CD4-positive, alpha-beta T cell (primary cell): ENCODE measurements at regions of chr17 and their contacts with region 1.

Region 1: DNA sequence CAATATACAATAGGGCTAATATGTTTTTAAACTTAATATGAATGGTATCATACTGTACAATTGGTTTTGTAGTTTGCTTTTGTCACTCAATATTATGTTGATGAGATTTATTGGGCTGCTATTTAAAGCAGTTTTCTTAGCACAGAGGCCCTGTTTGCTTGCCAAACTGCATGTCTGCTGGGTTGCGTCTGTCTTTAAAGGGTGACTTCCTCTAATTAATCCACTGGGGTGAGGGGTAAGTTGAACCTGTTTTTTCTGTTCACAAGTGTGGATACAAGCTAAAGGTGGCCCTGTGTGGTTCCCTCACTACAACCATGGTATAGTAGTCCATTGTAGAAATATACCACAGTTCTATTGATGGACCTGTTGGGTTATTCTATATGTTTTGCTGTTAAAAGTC is 19.7 kb downstream of the TTC19 start:
- DNase-seq: no peak
- ATAC-seq: no peak
- H3K4me3 ChIP-seq: no peak overlapping the region
- H3K4me3 Mint-ChIP-seq: no peak overlapping the region
- H3K27ac ChIP-seq: peak overlapping the region in 1 of 2 donors; percentile 13
- H3K27ac Mint-ChIP-seq: peak overlapping the region; percentile 50
- H3K4me1 ChIP-seq: no peaks in the 10 kb centered on the region
- H3K4me1 Mint-ChIP-seq: peaks cover 20% of the 10 kb centered on the region
- H3K27me3 ChIP-seq: no peaks in the 10 kb centered on the region
- H3K27me3 Mint-ChIP-seq: no peaks in the 10 kb centered on the region
- CTCF ChIP-seq: no peak

Region 2: GRCh38 chr17:16007439-16007838 is 11.9 kb before region 1 on chr17:
- CTCF ChIA-PET with region 1: no interaction called
- POLR2A ChIA-PET with region 1: no interaction called
- intact Hi-C with region 1: no loop called
- DNase-seq: no peak
- ATAC-seq: no peak
- H3K4me3 ChIP-seq: no peak overlapping the region
- H3K4me3 Mint-ChIP-seq: no peak overlapping the region
- H3K27ac ChIP-seq: no peak overlapping the region
- H3K27ac Mint-ChIP-seq: no peak overlapping the region
- H3K4me1 ChIP-seq: no peaks in the 10 kb centered on the region
- H3K4me1 Mint-ChIP-seq: peaks cover 33% of the 10 kb centered on the region
- H3K27me3 ChIP-seq: no peaks in the 10 kb centered on the region
- H3K27me3 Mint-ChIP-seq: no peaks in the 10 kb centered on the region
- CTCF ChIP-seq: no peak

Region 3: DNA sequence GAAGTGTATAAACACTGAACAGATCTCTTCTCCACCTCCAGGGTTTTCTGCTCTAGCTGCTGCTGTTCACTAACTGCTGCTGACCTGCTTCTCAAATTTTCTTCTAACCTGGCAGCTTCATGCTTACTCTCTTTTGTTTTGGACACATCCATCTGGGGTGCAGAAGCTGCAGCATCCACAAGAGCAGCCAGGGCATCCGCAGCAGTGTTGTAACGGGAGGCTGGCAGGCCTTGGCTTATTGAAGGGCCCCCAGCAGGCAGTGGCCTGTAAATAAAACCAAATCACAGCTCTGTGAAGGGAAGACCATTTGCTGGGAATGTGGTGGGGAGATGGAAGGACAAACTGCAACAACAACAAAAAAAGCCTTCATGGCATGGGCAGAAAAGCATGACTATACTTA is 42.3 kb after region 1 on chr17:
- CTCF ChIA-PET with region 1: no interaction called
- POLR2A ChIA-PET with region 1: no interaction called
- intact Hi-C with region 1: loop called in 1 of 2 experiments (anchors 2 kb)
- DNase-seq: no peak
- ATAC-seq: no peak
- H3K4me3 ChIP-seq: no peak overlapping the region
- H3K4me3 Mint-ChIP-seq: no peak overlapping the region
- H3K27ac ChIP-seq: no peak overlapping the region
- H3K27ac Mint-ChIP-seq: no peak overlapping the region
- H3K4me1 ChIP-seq: no peaks in the 10 kb centered on the region
- H3K4me1 Mint-ChIP-seq: no peaks in the 10 kb centered on the region
- H3K27me3 ChIP-seq: no peaks in the 10 kb centered on the region
- H3K27me3 Mint-ChIP-seq: no peaks in the 10 kb centered on the region
- CTCF ChIP-seq: no peak

Region 4: GRCh38 chr17:16135461-16135860 is 116.1 kb after region 1 on chr17:
- CTCF ChIA-PET with region 1: no interaction called
- POLR2A ChIA-PET with region 1: no interaction called
- intact Hi-C with region 1: no loop called
- DNase-seq: no peak
- ATAC-seq: no peak
- H3K4me3 ChIP-seq: no peak overlapping the region
- H3K4me3 Mint-ChIP-seq: no peak overlapping the region
- H3K27ac ChIP-seq: no peak overlapping the region
- H3K27ac Mint-ChIP-seq: no peak overlapping the region
- H3K4me1 ChIP-seq: no peaks in the 10 kb centered on the region
- H3K4me1 Mint-ChIP-seq: no peaks in the 10 kb centered on the region
- H3K27me3 ChIP-seq: no peaks in the 10 kb centered on the region
- H3K27me3 Mint-ChIP-seq: no peaks in the 10 kb centered on the region
- CTCF ChIP-seq: no peak